ENCODE measurements at regions of chr15 and their contacts with region 1.

Region 1: DNA sequence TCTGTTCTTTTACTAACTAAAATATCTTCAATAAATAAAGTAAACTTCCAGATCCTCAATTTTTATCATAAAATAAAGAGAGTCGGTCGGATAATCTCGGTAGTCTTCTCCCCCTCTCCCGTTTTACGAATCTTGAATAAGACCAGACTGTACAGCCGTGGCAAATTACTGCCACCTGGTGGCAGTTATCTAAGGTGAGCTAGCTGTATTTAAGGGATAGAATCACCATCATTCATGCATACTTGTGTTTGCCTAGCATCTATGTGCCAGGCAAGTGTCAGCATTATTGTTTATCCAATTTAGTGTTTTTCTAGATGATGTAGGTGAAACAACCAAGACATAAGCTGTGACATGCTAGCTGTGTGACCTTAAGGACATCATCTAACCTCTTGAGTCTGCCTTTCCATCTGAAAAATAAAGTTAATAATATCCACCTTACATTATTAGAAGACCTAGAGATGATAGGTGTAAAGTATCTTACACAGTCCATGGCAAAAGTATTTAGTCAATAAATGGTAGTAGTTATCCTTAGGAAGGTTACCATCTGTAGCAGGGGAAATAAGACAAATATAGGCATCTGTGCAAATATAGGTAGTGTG is 21.3 kb downstream of the DUT start:
- DNase-seq: peak in 1 of 2 donors; percentile 22
- ATAC-seq: peak; percentile 78 to 84
- H3K4me3 ChIP-seq: peak overlapping the region in 2 of 4 donors; percentile 11 to 15
- H3K27ac ChIP-seq: no peak overlapping the region
- H3K4me1 ChIP-seq: no peaks in the 10 kb centered on the region
- H3K27me3 ChIP-seq: no peaks in the 10 kb centered on the region
- CTCF ChIP-seq: peak in 4 of 5 experiments; percentile 45 to 79 (median 60)
- POLR2A ChIP-seq: no peak

Region 2: GRCh38 chr15:48645558-48646330 is 293.2 kb after region 1 on chr15 and contains the start of gene FBN1:
- in situ Hi-C with region 1: loop called in 2 of 4 experiments (anchors 25 kb)
- intact Hi-C with region 1: no loop called
- DNase-seq: peak; percentile 33 to 53
- ATAC-seq: peak; percentile 58
- H3K4me3 ChIP-seq: peak within 1 kb of the TSS; percentile 64 to 74 (median 68)
- H3K27ac ChIP-seq: peak within 1 kb of the TSS; percentile 64 to 75 (median 74)
- H3K4me1 ChIP-seq: no peaks in the 10 kb centered on the region
- H3K27me3 ChIP-seq: peaks cover 4 to 22% (median 8%) of the 10 kb centered on the region in 3 donors
- CTCF ChIP-seq: no peak
- POLR2A ChIP-seq: peak; percentile 53 to 76
- total RNA-seq, gene FBN1: 13.0 to 28.0 (median 20.9) TPM

Region 3: GRCh38 chr15:48800811-48801455 is 448.4 kb after region 1 on chr15:
- in situ Hi-C with region 1: loop called (anchors 10 to 25 kb)
- intact Hi-C with region 1: loop called (anchors 5 kb)
- DNase-seq: no peak
- ATAC-seq: peak in 1 of 2 donors; percentile 33
- H3K4me3 ChIP-seq: no peak overlapping the region
- H3K27ac ChIP-seq: no peak overlapping the region
- H3K4me1 ChIP-seq: no peaks in the 10 kb centered on the region
- H3K27me3 ChIP-seq: no peaks in the 10 kb centered on the region
- CTCF ChIP-seq: peak in 2 of 5 experiments; percentile 23 to 36
- POLR2A ChIP-seq: no peak

Region 4: GRCh38 chr15:48810414-48811317 is 458.1 kb after region 1 on chr15 and contains the start of gene CEP152:
- in situ Hi-C with region 1: loop called (anchors 10 to 25 kb)
- intact Hi-C with region 1: no loop called
- DNase-seq: peak; percentile 97 to 99
- ATAC-seq: peak; percentile 99
- H3K4me3 ChIP-seq: peak within 1 kb of the TSS; percentile 67 to 88 (median 79)
- H3K27ac ChIP-seq: peak within 1 kb of the TSS; percentile 21 to 61 (median 48)
- H3K4me1 ChIP-seq: peaks cover 0 to 8% of the 10 kb centered on the region in 2 donors
- H3K27me3 ChIP-seq: no peaks in the 10 kb centered on the region
- CTCF ChIP-seq: no peak
- POLR2A ChIP-seq: peak in 1 of 2 donors; percentile 39
- total RNA-seq, gene CEP152: 0.51 to 2.4 (median 1.4) TPM

Region 5: DNA sequence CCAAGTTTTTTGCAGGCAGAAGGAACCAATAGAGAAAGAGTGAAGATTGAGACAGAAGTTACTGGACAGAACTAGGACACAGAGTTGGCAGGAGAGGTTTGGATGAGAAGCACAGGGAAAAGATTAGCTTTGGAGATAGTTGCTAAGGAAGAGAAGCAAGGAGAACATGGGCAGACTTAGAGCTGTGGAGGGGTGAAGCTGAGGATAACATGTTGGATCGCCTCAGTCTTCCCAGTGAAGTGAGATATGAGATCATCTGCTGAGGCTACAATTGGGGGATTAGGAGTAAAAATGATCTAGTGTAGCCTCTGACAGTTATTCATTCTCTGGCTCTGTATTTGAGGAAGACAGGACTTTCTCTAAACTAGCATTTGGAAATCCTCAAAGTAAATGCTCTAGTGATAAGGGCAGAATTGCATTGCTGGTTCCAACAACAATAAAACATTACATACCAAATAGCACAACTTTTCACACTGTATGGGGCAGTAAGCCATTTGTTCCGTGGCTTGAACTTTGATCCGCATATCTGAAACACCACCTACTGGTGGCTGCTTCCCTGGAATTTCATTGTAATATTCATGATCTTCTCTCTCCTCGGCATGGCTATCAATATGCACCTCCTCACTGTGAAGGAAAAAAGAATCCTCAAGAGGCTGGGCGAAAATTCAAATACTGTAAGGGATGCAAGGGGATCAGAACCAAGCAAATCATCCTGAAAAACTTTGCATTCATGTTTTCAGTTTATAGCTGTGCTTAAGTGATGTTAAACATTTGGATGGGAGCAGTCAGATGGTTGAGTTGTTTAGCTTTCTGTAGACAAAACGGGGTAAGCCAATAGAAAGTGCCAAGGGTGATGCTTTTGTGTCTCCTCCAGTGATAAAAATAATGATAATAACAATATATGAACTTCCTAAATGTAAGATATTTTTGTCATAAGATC is 503.2 kb after region 1 on chr15:
- in situ Hi-C with region 1: no loop called
- intact Hi-C with region 1: loop called (anchors 10 kb)
- DNase-seq: no peak
- ATAC-seq: no peak
- H3K4me3 ChIP-seq: no peak overlapping the region
- H3K27ac ChIP-seq: no peak overlapping the region
- H3K4me1 ChIP-seq: no peaks in the 10 kb centered on the region
- H3K27me3 ChIP-seq: no peaks in the 10 kb centered on the region
- CTCF ChIP-seq: peak in 2 of 5 experiments; percentile 12 to 36
- POLR2A ChIP-seq: no peak